Activated naive CD4-positive, alpha-beta T cell treated with anti-CD3 and anti-CD28 coated beads for 36 hours (primary cell): ENCODE measurements at regions of chr11 and their contacts with region 1.

Region 1: GRCh38 chr11:34997952-34998528 is 81.6 kb downstream of the PDHX start:
- DNase-seq: no peak
- H3K4me3 Mint-ChIP-seq: no peak overlapping the region
- H3K27ac Mint-ChIP-seq: peak overlapping the region; percentile 9
- H3K4me1 Mint-ChIP-seq: peaks cover 30% of the 10 kb centered on the region
- H3K27me3 Mint-ChIP-seq: no peaks in the 10 kb centered on the region

Region 2: DNA sequence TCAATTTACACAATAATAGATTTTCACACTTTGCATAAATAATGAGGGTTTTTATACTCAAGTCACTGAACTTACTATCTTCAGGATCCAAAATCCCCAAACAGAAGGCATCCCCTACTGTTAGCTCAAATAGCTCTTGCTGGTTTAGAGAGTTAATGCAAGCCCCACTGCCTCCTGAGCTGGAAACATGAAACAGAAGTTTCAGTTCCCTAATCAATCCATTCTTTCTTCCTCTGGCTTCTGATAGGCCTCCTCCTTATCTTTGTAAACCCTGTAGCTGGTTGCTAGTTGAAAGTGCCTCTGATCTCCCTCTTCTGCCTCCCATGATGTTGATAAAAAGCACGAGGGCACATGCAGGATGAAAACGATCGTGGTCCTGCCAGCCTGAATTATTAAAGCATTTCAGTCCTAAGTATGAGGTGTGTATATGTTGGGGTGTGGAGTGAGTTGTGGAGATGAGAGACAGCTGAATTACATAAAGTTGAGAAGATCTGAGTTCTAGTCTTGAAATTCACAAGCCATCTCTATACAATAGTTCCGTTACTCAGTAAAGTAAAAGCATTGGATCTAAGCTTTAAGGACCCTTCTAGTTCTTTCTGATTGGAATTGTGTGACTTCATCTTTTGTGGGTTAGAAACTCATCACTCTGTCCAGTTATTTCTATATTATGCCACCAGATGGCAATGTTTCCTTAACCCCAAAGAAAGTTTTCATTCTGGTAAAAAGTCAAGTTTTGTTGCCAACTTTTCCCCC is 412.1 kb before region 1 on chr11:
- CTCF ChIA-PET with region 1: interaction called, 3 read pairs
- intact Hi-C with region 1: loop called (anchors 5 kb)
- DNase-seq: no peak
- H3K4me3 Mint-ChIP-seq: no peak overlapping the region
- H3K27ac Mint-ChIP-seq: no peak overlapping the region
- H3K4me1 Mint-ChIP-seq: peaks cover 4% of the 10 kb centered on the region
- H3K27me3 Mint-ChIP-seq: peaks cover 16% of the 10 kb centered on the region

Region 3: GRCh38 chr11:35040221-35040942 is 42.3 kb after region 1 on chr11:
- CTCF ChIA-PET with region 1: interaction called, 5 read pairs
- intact Hi-C with region 1: loop called (anchors 5 kb)
- DNase-seq: peak; percentile 83
- H3K4me3 Mint-ChIP-seq: peak overlapping the region; percentile 76
- H3K27ac Mint-ChIP-seq: peak overlapping the region; percentile 94
- H3K4me1 Mint-ChIP-seq: peaks cover 60% of the 10 kb centered on the region
- H3K27me3 Mint-ChIP-seq: peaks cover 5% of the 10 kb centered on the region

Region 4: DNA sequence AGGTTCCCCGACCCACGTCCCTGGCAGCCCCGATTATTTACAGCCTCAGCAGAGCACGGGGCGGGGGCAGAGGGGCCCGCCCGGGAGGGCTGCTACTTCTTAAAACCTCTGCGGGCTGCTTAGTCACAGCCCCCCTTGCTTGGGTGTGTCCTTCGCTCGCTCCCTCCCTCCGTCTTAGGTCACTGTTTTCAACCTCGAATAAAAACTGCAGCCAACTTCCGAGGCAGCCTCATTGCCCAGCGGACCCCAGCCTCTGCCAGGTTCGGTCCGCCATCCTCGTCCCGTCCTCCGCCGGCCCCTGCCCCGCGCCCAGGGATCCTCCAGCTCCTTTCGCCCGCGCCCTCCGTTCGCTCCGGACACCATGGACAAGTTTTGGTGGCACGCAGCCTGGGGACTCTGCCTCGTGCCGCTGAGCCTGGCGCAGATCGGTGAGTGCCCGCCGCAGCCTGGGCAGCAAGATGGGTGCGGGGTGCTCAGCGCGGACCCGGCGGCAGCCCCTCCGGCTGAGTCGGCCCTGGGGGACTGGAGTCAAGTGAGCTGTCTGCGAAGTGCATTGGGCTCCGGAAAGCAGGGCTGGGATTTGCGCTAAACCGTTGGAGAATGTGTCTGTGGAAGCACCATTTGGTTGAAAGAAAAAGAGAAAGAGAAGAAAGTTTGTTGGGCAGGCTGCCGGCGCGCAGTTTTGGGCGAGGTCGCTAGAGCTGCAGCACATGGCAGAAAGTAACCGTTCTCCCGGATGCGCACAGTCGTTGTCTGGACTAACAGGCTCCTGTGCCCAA is 141.1 kb after region 1 on chr11 and contains the start of gene CD44:
- CTCF ChIA-PET with region 1: interaction called, 16 read pairs
- intact Hi-C with region 1: loop called (anchors 1 kb)
- DNase-seq: peak; percentile 77
- H3K4me3 Mint-ChIP-seq: peak within 1 kb of the TSS; percentile 85
- H3K27ac Mint-ChIP-seq: peak within 1 kb of the TSS; percentile 97
- H3K4me1 Mint-ChIP-seq: peaks cover 43% of the 10 kb centered on the region
- H3K27me3 Mint-ChIP-seq: no peaks in the 10 kb centered on the region
- total RNA-seq, gene CD44: 389 to 405 TPM

Region 5: DNA sequence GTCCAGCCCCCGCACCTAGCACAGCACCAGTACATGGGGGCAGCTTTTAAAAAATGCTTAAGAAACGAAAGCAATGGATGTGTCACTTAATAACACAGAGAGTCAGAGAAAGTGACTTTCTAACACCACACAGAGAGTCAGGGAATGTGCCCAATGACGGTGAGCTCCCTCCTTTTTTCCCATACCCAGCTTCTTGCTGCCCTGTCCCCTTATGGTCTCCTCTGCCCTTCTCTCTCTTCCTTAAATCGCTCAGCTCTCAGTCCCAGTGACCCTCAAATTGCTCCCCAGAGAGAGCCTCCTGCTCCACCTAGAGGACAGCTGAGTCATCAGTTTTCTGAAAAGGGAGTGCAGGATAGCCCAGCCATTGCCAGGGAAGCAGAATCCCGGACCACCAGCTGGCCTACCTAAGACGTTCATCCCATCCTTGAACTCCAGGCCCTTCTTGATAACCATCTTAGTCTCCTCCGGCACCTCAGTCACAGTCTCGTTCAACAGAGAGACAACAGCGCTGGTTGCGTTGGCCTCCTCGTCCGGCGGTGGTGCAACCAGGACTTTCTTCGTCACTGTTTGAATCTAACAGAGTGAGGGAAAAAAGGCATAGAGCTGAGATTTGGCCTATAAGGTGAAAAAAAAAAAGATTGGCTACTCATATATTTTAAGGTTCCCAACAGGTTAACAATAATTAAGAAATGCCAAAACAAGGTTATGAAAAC is 307.8 kb after region 1 on chr11:
- CTCF ChIA-PET with region 1: interaction called, 5 read pairs
- intact Hi-C with region 1: loop called (anchors 1 kb)
- DNase-seq: peak; percentile 46
- H3K4me3 Mint-ChIP-seq: peak overlapping the region; percentile 58
- H3K27ac Mint-ChIP-seq: peak overlapping the region; percentile 33
- H3K4me1 Mint-ChIP-seq: peaks cover 22% of the 10 kb centered on the region
- H3K27me3 Mint-ChIP-seq: no peaks in the 10 kb centered on the region

Region 6: GRCh38 chr11:36265793-36266628 is 1268.0 kb after region 1 on chr11:
- CTCF ChIA-PET with region 1: no interaction called
- intact Hi-C with region 1: loop called (anchors 10 kb)
- DNase-seq: peak; percentile 74
- H3K4me3 Mint-ChIP-seq: no peak overlapping the region
- H3K27ac Mint-ChIP-seq: no peak overlapping the region
- H3K4me1 Mint-ChIP-seq: no peaks in the 10 kb centered on the region
- H3K27me3 Mint-ChIP-seq: peaks cover 1% of the 10 kb centered on the region